Pancreas (tissue), 10 donors: ENCODE measurements at regions of chr6 and their contacts with region 1.

Region 1: GRCh38 chr6:44655412-44656342 is 268.2 kb downstream of the CDC5L start:
- DNase-seq: peak; percentile 28 to 90 (median 68)
- ATAC-seq: peak; percentile 58 to 93 (median 90)
- H3K4me3 ChIP-seq: no peak overlapping the region
- H3K27ac ChIP-seq: peak overlapping the region in 1 of 4 donors; percentile 23
- H3K4me1 ChIP-seq: no peaks in the 10 kb centered on the region
- H3K27me3 ChIP-seq: no peaks in the 10 kb centered on the region
- CTCF ChIP-seq: peak; percentile 82 to 93 (median 85)

Region 2: DNA sequence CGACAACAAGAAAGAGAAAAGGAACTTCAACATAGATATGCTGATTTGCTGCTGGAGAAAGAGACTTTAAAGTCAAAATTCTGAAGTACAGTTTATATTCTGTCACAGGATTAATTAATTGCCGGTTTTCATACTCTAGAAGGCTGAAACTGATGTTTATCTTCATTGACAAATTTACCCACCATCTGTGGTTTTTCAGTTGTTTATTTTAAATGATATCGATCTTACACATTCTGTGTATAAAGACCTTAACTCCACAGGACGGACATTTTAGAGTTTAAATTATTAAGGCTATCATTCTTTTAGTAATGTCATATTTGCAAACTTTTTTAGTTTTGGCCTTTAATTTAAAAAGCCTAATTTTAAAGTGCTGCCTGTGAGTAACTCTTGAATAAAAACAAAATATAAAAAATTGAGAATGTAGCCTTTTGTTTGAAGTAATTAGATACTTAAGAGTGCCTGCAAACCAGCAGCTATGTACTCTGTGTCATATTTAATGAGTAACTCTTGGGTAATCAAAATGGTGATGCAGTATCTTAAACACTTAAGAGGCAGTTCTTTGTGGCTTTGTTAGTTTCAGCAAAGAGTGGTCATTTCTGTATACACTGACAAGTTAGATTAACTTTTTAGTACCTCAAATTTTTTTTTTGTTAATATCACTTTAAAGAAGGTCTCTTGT is 208.9 kb before region 1 on chr6:
- intact Hi-C with region 1: no loop called
- DNase-seq: no peak
- ATAC-seq: peak; percentile 86 to 94 (median 93)
- H3K4me3 ChIP-seq: no peak overlapping the region
- H3K27ac ChIP-seq: peak overlapping the region in 2 of 4 donors; percentile 56 to 61
- H3K4me1 ChIP-seq: peaks cover 16 to 29% (median 19%) of the 10 kb centered on the region in 3 donors
- H3K27me3 ChIP-seq: no peaks in the 10 kb centered on the region
- CTCF ChIP-seq: no peak

Region 3: GRCh38 chr6:44820321-44820720 is 164.6 kb after region 1 on chr6:
- intact Hi-C with region 1: no loop called
- DNase-seq: no peak
- ATAC-seq: peak in 1 of 4 donors; percentile 23
- H3K4me3 ChIP-seq: no peak overlapping the region
- H3K27ac ChIP-seq: no peak overlapping the region
- H3K4me1 ChIP-seq: no peaks in the 10 kb centered on the region
- H3K27me3 ChIP-seq: no peaks in the 10 kb centered on the region
- CTCF ChIP-seq: no peak

Region 4: DNA sequence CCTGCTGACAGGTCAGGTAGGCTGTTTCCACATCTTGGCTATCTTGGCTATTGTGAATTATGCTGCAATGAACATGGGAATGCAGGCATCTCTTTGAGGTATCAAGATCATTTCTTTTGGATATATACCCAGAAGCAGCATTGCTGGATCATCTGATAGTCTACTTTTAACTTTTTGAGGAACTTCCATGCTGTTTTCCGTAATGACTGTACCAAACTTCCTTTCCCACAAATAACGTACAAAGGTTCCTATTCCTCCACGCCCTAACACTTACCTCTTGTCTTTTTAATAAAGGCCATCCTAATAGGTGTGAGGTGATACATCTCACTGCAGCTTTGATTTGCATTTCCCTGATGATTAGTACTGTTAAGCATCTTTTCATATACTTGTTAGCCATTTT is 333.7 kb after region 1 on chr6:
- intact Hi-C with region 1: no loop called
- DNase-seq: no peak
- ATAC-seq: no peak
- H3K4me3 ChIP-seq: no peak overlapping the region
- H3K27ac ChIP-seq: no peak overlapping the region
- H3K4me1 ChIP-seq: no peaks in the 10 kb centered on the region
- H3K27me3 ChIP-seq: no peaks in the 10 kb centered on the region
- CTCF ChIP-seq: no peak

Region 5: GRCh38 chr6:45421709-45422502 is 766.2 kb after region 1 on chr6:
- intact Hi-C with region 1: loop called in 1 of 3 experiments (anchors 10 kb)
- DNase-seq: peak; percentile 18 to 86 (median 43)
- ATAC-seq: peak; percentile 61 to 78 (median 72)
- H3K4me3 ChIP-seq: peak overlapping the region; percentile 27 to 60 (median 44)
- H3K27ac ChIP-seq: peak overlapping the region in 2 of 4 donors; percentile 35 to 67
- H3K4me1 ChIP-seq: peaks cover 0 to 19% (median 6%) of the 10 kb centered on the region in 3 donors
- H3K27me3 ChIP-seq: peaks cover 0 to 42% (median 9%) of the 10 kb centered on the region in 4 donors
- CTCF ChIP-seq: no peak